ENCODE measurements at regions of chrX and their contacts with region 1.

Region 1: GRCh38 chrX:41084044-41084892 is 977 bp upstream of the USP9X start:
- DNase-seq: peak; percentile 91
- H3K4me3 ChIP-seq: peak overlapping the region; percentile 97
- H3K27ac ChIP-seq: peak overlapping the region; percentile 95
- H3K4me1 ChIP-seq: peaks cover 32% of the 10 kb centered on the region
- CTCF ChIP-seq: no peak

Region 2: GRCh38 chrX:40580537-40581335 is 503.5 kb before region 1 on chrX and contains the start of gene ATP6AP2:
- CTCF ChIA-PET with region 1: no interaction called
- POLR2A ChIA-PET with region 1: no interaction called
- intact Hi-C with region 1: loop called (anchors 10 kb)
- DNase-seq: peak; percentile 93
- H3K4me3 ChIP-seq: peak within 1 kb of the TSS; percentile 89
- H3K27ac ChIP-seq: peak within 1 kb of the TSS; percentile 48
- H3K4me1 ChIP-seq: peaks cover 11% of the 10 kb centered on the region
- CTCF ChIP-seq: no peak
- total RNA-seq, gene ATP6AP2: 20.6 and 28.2 TPM in 2 replicates

Region 3: DNA sequence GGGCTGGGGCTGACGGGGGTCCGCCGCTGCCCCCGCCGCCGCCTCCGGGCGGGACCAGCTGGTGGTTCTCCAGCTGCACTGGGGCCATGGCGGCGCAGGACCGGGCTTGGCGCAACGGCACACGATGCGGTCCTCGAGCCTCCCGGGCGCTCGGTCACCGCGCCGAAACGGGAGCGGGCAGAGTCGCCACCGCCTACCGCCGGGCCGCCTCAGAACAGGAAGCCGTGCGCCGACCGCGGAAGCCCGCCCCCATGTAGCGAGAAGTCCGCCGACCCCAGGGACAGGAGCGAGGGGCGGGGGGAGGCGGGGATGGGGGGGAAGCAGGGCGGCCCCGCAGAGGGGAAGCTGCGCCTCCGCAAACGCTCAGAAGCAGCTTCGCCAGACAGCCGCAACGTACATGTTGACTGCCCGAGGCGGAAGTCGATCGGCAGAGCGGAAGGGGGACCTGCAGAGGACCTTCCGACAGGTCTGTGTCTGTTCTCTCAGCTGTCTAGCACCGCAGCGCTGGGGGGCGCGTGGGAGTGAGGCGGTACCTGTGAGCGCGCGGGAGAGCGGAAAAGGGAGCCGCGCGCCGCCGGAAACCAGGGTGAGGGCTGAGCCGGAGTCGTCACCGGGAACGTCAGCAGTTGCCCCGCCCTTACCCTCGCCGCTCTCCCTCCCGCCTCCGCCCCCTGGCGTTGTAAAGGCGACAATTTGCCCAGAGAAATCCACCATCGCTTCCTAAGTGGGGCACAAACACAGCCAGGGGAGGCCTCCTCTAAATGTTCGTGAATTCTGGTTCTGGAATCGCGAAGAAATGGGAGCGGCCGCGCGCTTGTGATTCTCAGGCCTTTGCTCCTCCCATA is 348.7 kb before region 1 on chrX and contains the start of gene MED14:
- CTCF ChIA-PET with region 1: no interaction called
- POLR2A ChIA-PET with region 1: no interaction called
- intact Hi-C with region 1: loop called (anchors 2 kb)
- DNase-seq: peak; percentile 89
- H3K4me3 ChIP-seq: peak within 1 kb of the TSS; percentile 87
- H3K27ac ChIP-seq: peak within 1 kb of the TSS; percentile 85
- H3K4me1 ChIP-seq: peaks cover 19% of the 10 kb centered on the region
- CTCF ChIP-seq: peak; percentile 52
- total RNA-seq, gene MED14: 28.1 and 39.4 TPM in 2 replicates

Region 4: GRCh38 chrX:41116948-41117347 is 32.7 kb after region 1 on chrX:
- CTCF ChIA-PET with region 1: no interaction called
- POLR2A ChIA-PET with region 1: interaction called, 6 read pairs
- intact Hi-C with region 1: loop called (anchors 2 kb)
- DNase-seq: peak; percentile 39
- H3K4me3 ChIP-seq: peak overlapping the region; percentile 25
- H3K27ac ChIP-seq: no peak overlapping the region
- H3K4me1 ChIP-seq: peaks cover 18% of the 10 kb centered on the region
- CTCF ChIP-seq: no peak